ENCODE measurements at regions of chr1 and their contacts with region 1.

Region 1: DNA sequence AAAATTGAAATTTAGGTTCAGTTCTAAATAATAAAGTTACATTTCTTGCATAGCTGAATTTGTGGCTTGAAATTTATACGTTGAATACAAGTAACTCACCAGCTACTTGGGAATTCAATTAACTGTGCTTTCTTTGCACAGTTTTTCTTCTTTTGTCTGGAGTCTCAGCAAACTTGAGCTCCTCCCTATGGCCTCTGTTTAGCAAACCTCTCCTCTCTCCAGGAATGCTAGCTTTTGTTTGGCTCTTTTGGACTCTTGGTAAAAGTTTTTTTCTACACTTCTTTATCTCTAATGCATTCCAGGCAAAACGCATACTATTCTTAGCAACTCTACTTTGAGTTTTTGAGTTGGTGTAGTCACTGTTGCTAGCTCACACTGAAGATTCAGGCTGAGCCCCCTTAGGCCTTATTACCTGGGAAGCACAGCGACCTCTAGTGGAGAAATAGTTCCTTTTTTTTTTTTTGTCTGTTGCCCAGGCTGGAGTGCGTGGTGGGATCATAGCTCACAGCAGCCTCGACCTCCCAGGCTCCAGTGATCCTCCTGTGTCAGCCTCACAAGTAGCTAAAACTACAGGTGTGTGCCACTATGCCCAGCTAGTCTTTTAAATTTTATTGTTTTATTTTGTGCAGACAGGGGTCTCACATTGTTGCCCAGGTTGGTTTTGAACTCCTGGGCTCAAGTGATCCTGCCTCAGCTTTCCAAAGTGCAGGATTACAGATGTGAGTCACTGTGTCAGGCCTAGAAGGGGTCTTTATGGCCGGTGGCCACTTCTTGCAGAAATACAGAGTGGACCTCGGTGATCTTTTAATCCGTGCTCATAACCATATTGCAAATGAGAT is 61.7 kb downstream of the CASQ2 start:
- DNase-seq: peak; percentile 43 to 76 (median 71)
- H3K4me3 ChIP-seq: no peak overlapping the region
- H3K27ac ChIP-seq: no peak overlapping the region
- H3K4me1 ChIP-seq: no peaks in the 10 kb centered on the region
- H3K27me3 ChIP-seq: no peaks in the 10 kb centered on the region

Region 2: GRCh38 chr1:115595279-115596079 is 111.3 kb before region 1 on chr1:
- CTCF ChIA-PET with region 1: interaction called, 11 read pairs
- POLR2A ChIA-PET with region 1: no interaction called
- DNase-seq: peak; percentile 72 to 86 (median 80)
- H3K4me3 ChIP-seq: no peak overlapping the region
- H3K27ac ChIP-seq: no peak overlapping the region
- H3K4me1 ChIP-seq: peaks cover 0 to 4% (median 0%) of the 10 kb centered on the region in 4 experiments
- H3K27me3 ChIP-seq: no peaks in the 10 kb centered on the region

Region 3: GRCh38 chr1:115609021-115609420 is 97.8 kb before region 1 on chr1:
- CTCF ChIA-PET with region 1: interaction called, 46 read pairs
- POLR2A ChIA-PET with region 1: no interaction called
- DNase-seq: no peak
- H3K4me3 ChIP-seq: no peak overlapping the region
- H3K27ac ChIP-seq: no peak overlapping the region
- H3K4me1 ChIP-seq: no peaks in the 10 kb centered on the region
- H3K27me3 ChIP-seq: no peaks in the 10 kb centered on the region

Region 4: DNA sequence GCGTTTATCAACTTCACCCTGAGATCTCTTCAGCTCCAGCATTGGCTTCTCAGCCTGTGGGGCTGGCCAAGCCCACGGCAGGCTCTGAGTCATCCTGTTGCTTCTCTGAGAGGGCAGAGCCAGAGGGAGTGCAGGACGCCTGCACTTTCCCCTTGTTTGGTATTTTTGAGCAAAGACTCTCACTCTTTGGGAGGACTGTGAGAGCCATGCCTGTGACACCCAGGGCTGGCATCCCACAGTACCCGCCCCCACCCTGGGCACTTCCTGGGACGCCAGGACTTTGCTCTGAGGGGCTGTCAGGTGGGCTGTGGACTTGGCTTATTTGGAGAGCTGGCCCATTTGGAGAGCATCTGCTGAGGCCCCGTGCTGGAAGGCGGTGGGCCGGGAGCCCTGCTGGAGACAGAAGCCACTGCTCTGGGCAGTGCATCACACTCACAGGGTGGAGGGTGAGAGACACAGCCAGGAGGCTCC is 27.6 kb before region 1 on chr1:
- CTCF ChIA-PET with region 1: interaction called, 10 read pairs
- POLR2A ChIA-PET with region 1: no interaction called
- DNase-seq: peak in 1 of 3 donors; percentile 12
- H3K4me3 ChIP-seq: no peak overlapping the region
- H3K27ac ChIP-seq: peak overlapping the region in 1 of 2 experiments; percentile 1
- H3K4me1 ChIP-seq: peaks cover 0 to 15% (median 12%) of the 10 kb centered on the region in 4 experiments
- H3K27me3 ChIP-seq: no peaks in the 10 kb centered on the region

Region 5: DNA sequence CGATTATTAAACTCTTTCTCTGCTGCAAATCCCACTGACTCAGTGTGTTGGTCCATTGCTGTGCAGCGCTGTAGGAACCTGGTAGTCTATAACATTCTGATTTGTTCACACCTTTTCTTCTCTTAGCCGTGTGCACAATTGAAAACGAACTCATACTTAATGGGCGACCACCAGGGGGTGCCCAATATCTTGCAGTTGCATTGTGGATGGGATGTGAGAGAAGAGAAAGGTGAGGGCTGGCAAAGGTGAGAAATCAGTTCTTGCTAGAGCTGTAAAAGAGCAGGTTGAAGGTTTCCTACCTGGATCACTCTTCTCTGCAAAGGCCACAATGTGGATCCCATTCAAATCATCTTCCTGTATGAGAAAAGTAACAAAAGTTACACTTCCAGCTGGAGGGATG is 10.7 kb after region 1 on chr1:
- CTCF ChIA-PET with region 1: interaction called, 15 read pairs
- POLR2A ChIA-PET with region 1: no interaction called
- DNase-seq: peak; percentile 37 to 61 (median 58)
- H3K4me3 ChIP-seq: no peak overlapping the region
- H3K27ac ChIP-seq: no peak overlapping the region
- H3K4me1 ChIP-seq: no peaks in the 10 kb centered on the region
- H3K27me3 ChIP-seq: no peaks in the 10 kb centered on the region

Region 6: DNA sequence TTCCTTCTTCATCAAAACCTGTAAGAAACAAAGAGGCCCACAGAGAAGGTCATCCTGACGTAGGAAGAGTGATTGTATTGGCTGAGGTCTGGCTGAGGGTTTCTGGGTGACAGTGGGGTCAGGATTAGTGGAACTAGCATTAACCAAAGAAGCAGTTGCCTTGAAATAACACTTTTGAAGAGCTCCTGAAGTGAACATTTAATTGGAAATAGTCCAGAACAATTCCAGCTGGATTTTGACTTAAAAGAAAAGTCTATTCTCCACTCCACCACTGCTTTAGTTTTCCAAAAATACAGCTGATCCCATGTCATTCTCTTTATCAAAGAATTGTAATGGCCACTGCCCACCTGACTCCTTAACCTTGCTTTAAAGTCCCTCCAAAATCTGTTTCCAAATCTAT is 34.0 kb after region 1 on chr1:
- CTCF ChIA-PET with region 1: interaction called, 16 read pairs
- POLR2A ChIA-PET with region 1: no interaction called
- DNase-seq: no peak
- H3K4me3 ChIP-seq: no peak overlapping the region
- H3K27ac ChIP-seq: no peak overlapping the region
- H3K4me1 ChIP-seq: no peaks in the 10 kb centered on the region
- H3K27me3 ChIP-seq: peaks cover 0 to 5% (median 2%) of the 10 kb centered on the region in 5 experiments

Region 7: GRCh38 chr1:115781343-115781742 is 74.5 kb after region 1 on chr1:
- CTCF ChIA-PET with region 1: no interaction called
- POLR2A ChIA-PET with region 1: no interaction called
- DNase-seq: no peak
- H3K4me3 ChIP-seq: no peak overlapping the region
- H3K27ac ChIP-seq: no peak overlapping the region
- H3K4me1 ChIP-seq: no peaks in the 10 kb centered on the region
- H3K27me3 ChIP-seq: peaks cover 0 to 2% (median 0%) of the 10 kb centered on the region in 5 experiments

Measured in common myeloid progenitor, CD34-positive (primary cell).